ENCODE measurements at regions of chr1 and their contacts with region 1.

Region 1: GRCh38 chr1:59698386-59698785 is 116.4 kb upstream of the HOOK1 start:
- DNase-seq: no peak

Region 2: GRCh38 chr1:58896246-58897183 is 801.9 kb before region 1 on chr1:
- intact Hi-C with region 1: no loop called
- DNase-seq: no peak

Region 3: DNA sequence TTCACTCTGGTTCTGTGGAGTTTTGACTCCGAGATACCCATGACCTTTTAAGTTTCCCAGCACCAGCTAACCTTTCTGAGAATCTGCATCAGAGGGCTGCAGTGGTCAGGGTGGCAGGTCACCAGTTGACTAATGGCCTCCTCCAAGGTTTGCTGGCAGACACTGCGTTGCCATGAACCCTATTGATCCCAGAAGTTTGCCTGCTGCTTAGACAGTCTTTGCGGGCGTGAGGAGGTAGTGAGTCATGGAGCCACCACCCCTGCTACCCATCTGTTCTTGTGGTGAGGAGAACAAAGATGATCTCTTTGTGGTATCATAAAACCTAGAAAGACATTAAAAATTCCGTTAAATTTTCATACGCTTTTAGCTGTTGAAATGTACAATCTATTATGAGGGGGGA is 221.1 kb before region 1 on chr1:
- intact Hi-C with region 1: no loop called
- DNase-seq: no peak

Region 4: DNA sequence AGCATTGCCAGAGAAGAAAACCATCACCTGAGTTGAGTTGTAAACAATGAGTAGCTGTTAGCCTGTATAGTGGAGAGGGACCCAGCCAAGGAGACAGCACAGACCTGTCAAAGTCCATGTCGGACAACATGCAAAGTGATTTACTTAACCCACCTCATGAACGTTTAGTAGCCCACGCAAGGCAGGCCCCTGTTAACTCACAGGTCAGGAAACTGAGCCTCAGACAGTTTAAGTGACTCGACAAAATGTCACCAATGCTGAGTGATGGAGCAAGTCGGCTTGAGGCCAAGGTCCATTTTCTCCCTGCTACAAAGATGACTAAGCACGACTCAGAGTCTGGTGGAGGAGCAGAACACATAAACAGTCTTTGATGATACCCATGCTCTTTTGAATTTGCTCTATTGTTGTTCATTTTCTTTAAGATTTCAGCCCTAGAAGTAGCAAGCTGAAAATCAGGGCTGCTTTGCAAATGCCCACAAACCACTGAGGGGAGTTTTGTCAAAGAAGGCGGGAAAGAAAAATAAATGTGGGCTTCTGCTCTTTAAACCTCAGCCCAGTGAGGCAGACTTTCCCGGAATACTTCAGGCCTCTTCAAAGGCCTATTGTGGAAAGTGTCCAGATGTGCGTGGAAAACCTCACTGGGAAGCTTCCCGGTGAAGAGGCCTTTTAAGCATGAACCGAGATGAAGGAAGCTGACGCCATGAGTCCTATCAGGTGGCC is 32.5 kb after region 1 on chr1:
- intact Hi-C with region 1: loop called in 1 of 2 experiments (anchors 1 kb)
- DNase-seq: peak; percentile 92